ENCODE measurements at regions of chr5 and their contacts with region 1.

Region 1: GRCh38 chr5:54895816-54896341 is 89.5 kb downstream of the ESM1 start:
- DNase-seq: peak; percentile 54
- H3K27ac ChIP-seq: no peak overlapping the region
- CTCF ChIP-seq: peak; percentile 83

Region 2: DNA sequence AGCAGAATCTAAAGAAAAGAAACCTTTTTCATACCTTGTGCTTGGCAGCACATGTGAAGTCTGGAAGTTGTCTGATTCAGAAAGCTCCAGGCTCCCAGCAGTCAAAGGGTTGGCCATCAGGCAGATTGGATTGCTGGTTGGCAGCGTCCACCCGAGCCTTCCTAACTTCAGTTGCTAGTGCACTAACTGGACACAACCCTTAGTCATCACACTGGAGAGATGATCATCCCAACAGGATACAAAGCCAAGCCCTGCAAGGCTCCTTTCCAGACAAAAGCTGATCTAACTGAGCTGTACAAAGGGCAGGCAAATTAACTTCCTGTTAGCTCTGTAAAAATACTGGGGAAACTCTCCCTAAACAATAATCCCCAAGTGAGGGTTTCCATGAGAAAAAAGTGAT is 192.7 kb before region 1 on chr5:
- CTCF ChIA-PET with region 1: no interaction called
- POLR2A ChIA-PET with region 1: no interaction called
- DNase-seq: no peak
- H3K27ac ChIP-seq: no peak overlapping the region
- CTCF ChIP-seq: no peak

Region 3: DNA sequence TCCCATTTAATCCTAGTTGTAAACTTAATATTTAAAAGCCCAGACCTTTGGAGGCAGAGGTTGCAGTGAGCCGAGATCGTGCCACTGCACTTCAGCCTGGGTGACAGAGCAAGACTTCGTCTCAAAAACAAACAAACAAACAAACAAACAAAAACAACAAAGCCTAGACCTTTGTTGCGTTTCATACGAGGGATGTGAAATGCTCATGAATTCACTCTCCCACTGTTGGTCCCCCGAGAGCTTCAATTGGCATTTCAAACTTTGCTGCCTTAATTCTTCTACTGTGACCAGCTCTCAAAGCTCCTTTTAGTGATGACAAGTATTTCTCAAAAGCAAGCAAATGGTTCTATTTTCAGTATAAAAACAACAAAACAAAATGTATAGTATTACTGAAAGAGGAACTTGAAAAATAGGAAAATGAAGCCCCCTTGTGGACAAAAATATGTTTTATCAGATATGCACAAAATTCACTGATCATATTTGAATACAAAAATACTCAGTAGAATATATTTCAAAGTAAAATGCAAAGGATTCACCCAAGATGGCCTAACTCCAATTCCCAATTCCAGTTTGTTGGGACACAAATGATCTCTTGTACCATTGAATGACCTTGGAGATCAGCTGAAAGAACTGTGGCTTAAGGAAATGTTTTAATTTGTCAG is 50.8 kb before region 1 on chr5:
- CTCF ChIA-PET with region 1: interaction called, 13 read pairs
- POLR2A ChIA-PET with region 1: no interaction called
- DNase-seq: no peak
- H3K27ac ChIP-seq: no peak overlapping the region
- CTCF ChIP-seq: peak; percentile 79

Region 4: GRCh38 chr5:54852007-54852406 is 43.9 kb before region 1 on chr5:
- CTCF ChIA-PET with region 1: interaction called, 12 read pairs
- POLR2A ChIA-PET with region 1: no interaction called
- DNase-seq: no peak
- H3K27ac ChIP-seq: no peak overlapping the region
- CTCF ChIP-seq: no peak

Region 5: DNA sequence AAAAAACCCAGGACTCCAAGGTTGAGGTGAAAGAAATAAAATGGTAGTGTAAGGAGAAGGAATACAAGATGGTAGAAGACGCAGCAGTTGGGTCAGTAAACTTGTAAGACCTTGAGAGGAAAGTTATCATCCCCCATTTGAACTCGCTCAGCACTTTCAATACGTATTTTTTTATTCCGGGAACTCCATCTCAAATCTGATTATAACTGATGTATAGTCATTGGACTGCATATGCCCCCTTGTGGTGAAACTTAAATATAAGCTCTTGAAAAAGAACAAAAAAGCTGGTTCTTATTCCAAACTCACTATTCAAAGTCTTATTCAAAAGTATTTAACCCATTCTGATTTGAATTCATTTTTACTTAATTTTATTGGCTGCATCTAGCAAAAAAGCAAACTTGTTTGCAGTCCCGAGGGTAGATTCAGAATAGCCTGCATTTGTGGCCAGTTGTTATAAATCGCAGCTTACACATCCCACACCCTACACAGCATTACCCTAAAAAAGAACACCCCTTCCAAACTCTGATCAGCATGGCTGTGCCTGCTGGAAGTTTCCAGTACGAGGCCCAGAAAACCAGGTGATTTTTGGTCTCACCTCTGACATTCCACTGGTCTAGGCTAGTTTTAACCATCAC is 28.5 kb before region 1 on chr5:
- CTCF ChIA-PET with region 1: interaction called, 11 read pairs
- POLR2A ChIA-PET with region 1: no interaction called
- DNase-seq: peak; percentile 66
- H3K27ac ChIP-seq: no peak overlapping the region
- CTCF ChIP-seq: peak; percentile 83

Measured in RWPE1 (cell line).